Activated CD4-positive, alpha-beta T cell treated with anti-CD3 and anti-CD28 coated beads, Interleukin-2, amount 10 ng/mL, durations not matched to agents 24 days and 14 days (primary cell): ENCODE measurements at regions of chr7 and their contacts with region 1.

Region 1: GRCh38 chr7:143380255-143380645 is 895 bp upstream of the ZYX start:
- DNase-seq: peak; percentile 96
- H3K4me3 Mint-ChIP-seq: peak overlapping the region; percentile 87
- H3K27ac Mint-ChIP-seq: peak overlapping the region; percentile 86
- H3K4me1 Mint-ChIP-seq: peaks cover 44% of the 10 kb centered on the region
- H3K27me3 Mint-ChIP-seq: no peaks in the 10 kb centered on the region

Region 2: GRCh38 chr7:143287935-143288826 is 92.1 kb before region 1 on chr7 and contains the start of gene CASP2:
- intact Hi-C with region 1: loop called (anchors 1 kb)
- DNase-seq: peak; percentile 100
- H3K4me3 Mint-ChIP-seq: peak within 1 kb of the TSS; percentile 97
- H3K27ac Mint-ChIP-seq: peak within 1 kb of the TSS; percentile 95
- H3K4me1 Mint-ChIP-seq: peaks cover 54% of the 10 kb centered on the region
- H3K27me3 Mint-ChIP-seq: no peaks in the 10 kb centered on the region
- total RNA-seq, gene CASP2: 99.1 and 110 TPM in 2 replicates

Region 3: DNA sequence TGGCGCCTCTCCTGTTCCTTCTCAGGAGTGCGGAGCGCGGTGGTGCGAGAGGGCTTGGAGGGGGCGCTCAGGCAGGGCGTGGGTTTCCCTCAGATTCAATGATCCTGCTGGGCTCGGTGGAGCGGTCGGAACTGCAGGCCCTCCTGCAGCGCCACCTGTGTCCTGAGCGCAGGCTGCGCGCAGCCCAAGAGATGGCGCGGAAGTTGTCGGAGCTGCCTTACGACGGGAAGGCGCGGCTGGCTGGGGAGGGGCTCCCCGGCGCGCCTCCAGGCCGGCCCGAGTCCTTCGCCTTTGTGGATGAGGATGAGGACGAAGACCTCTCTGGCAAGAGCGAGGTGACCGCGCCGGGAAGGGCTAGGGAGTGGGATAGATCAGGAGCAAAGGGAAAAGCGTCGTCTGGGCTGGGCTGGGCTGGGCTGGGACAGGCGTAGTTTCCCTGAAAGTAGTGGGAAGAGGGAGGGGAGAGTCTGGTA is 34.8 kb before region 1 on chr7:
- intact Hi-C with region 1: loop called (anchors 5 kb)
- DNase-seq: peak; percentile 90
- H3K4me3 Mint-ChIP-seq: peak overlapping the region; percentile 77
- H3K27ac Mint-ChIP-seq: peak overlapping the region; percentile 52
- H3K4me1 Mint-ChIP-seq: peaks cover 18% of the 10 kb centered on the region
- H3K27me3 Mint-ChIP-seq: peaks cover 50% of the 10 kb centered on the region

Region 4: DNA sequence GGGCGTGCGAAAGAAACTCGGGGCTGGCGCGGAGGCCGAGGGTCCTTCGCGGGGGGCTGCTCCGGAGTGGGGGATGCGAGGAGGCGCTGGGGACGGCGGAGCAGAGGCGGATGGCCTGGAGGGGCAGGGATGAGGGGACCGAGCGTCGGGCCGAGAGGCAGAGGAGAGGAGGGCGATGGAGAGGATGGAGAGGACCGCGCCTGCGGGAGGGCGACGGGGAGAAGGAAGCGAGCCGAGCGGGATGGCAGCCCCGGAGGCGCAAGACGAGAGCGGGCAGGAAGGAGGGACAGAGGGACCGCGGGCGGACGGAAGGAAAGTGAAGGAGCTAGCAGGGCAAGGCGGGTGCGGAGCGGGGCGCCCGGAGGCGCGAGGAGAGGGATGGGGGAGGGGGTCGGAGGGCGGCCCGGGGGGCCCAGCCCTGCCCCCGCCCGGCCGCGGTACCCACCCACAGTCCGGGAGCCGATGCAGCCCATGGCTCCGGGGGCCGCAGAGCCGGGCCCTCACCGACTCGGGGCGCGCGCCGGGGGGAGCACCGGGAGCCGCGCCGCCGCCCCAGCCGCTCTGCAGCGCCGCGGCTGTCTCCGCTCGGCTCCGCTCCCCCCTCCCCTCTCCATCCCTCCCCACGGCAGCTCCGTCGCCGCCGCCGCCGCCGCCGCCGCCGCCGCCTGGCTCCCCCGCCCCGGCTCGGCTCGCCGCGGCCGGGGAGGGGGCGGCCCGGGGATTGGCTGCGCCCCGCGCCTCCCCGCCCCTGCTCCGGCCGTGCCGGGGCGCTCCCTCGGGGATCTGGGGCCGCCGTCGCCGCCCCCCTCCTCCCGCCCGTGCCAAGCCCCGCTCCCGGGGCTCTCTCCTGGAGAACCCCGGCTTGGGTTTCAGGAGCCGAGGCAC is 17.9 kb before region 1 on chr7 and contains the start of gene FAM131B:
- intact Hi-C with region 1: loop called (anchors 1 kb)
- DNase-seq: peak; percentile 76
- H3K4me3 Mint-ChIP-seq: peak within 1 kb of the TSS; percentile 89
- H3K27ac Mint-ChIP-seq: peak within 1 kb of the TSS; percentile 35
- H3K4me1 Mint-ChIP-seq: peaks cover 9% of the 10 kb centered on the region
- H3K27me3 Mint-ChIP-seq: peaks cover 74% of the 10 kb centered on the region
- total RNA-seq, gene FAM131B: 0.37 and 0.45 TPM in 2 replicates

Region 5: GRCh38 chr7:143408686-143409561 is 28.7 kb after region 1 on chr7 and contains the start of gene EPHA1:
- intact Hi-C with region 1: loop called (anchors 2 kb)
- DNase-seq: peak; percentile 73
- H3K4me3 Mint-ChIP-seq: peak within 1 kb of the TSS; percentile 83
- H3K27ac Mint-ChIP-seq: peak within 1 kb of the TSS; percentile 46
- H3K4me1 Mint-ChIP-seq: peaks cover 28% of the 10 kb centered on the region
- H3K27me3 Mint-ChIP-seq: peaks cover 15% of the 10 kb centered on the region
- total RNA-seq, gene EPHA1: 0.09 and 0.26 TPM in 2 replicates

Region 6: GRCh38 chr7:143416565-143417149 is 36.4 kb after region 1 on chr7:
- intact Hi-C with region 1: loop called (anchors 1 kb)
- DNase-seq: peak; percentile 80
- H3K4me3 Mint-ChIP-seq: no peak overlapping the region
- H3K27ac Mint-ChIP-seq: no peak overlapping the region
- H3K4me1 Mint-ChIP-seq: peaks cover 2% of the 10 kb centered on the region
- H3K27me3 Mint-ChIP-seq: peaks cover 16% of the 10 kb centered on the region